Activated CD4-positive, alpha-beta memory T cell treated with anti-CD3 and anti-CD28 coated beads for 36 hours (primary cell): ENCODE measurements at regions of chr14 and their contacts with region 1.

Region 1: DNA sequence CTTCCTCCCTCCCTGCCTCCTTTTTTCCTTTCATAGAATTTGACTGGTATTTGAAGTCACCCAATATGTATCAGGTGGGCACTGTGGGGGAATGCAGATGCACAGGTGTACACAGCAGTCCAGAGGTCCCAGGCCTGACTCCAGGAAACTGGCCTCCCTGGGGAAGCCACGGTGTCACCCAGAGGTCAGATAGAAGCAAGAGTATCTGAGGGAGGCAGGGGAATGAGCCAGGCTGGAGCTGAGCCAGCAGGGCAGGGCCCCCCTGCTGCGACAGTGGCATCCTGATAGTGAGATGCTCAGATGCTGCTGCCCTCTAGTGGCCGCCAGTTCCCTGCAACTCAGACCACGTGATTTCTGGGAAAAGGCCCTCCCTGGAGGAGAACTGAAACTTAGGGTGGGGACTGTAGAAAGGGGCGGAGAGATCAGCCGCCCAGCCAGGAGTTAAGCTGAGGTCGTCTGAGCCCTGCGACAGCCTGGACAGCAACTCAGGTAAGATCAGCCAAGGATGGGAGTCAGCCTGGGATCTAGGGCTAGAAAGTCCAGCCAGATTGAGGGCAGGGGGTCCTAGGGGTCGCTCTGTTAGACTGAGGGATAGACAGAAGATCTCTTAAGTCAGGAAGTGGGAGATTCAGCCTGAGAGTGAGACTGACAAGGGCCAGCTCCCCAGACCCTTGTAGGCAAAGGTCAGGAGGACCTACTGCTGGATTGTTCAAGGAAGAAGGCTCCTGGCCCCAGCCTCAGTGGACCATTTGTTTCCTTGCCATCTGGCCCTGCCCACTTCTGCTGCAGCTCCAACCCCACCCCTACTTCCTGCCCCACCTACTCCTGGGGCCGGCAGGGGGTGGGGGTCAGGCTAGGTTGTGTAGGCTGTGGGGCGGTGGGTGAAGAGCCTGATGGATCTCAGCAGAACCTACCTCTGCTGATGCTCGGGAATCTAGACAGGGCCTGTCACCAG is at the start of gene IRF9:
- DNase-seq: peak; percentile 99
- H3K4me3 Mint-ChIP-seq: peak within 1 kb of the TSS; percentile 97
- H3K27ac Mint-ChIP-seq: peak within 1 kb of the TSS; percentile 100
- H3K4me1 Mint-ChIP-seq: peaks cover 37% of the 10 kb centered on the region
- H3K27me3 Mint-ChIP-seq: no peaks in the 10 kb centered on the region
- total RNA-seq, gene IRF9: 158 to 172 TPM

Region 2: GRCh38 chr14:24013654-24014514 is 147.2 kb before region 1 on chr14:
- CTCF ChIA-PET with region 1: interaction called, 7 read pairs
- POLR2A ChIA-PET with region 1: no interaction called
- intact Hi-C with region 1: loop called (anchors 1 kb)
- DNase-seq: peak; percentile 53
- H3K4me3 Mint-ChIP-seq: no peak overlapping the region
- H3K27ac Mint-ChIP-seq: no peak overlapping the region
- H3K4me1 Mint-ChIP-seq: peaks cover 24% of the 10 kb centered on the region
- H3K27me3 Mint-ChIP-seq: peaks cover 6% of the 10 kb centered on the region

Region 3: GRCh38 chr14:24108336-24108874 is 52.7 kb before region 1 on chr14:
- CTCF ChIA-PET with region 1: interaction called, 50 read pairs
- POLR2A ChIA-PET with region 1: interaction called, 35 read pairs
- intact Hi-C with region 1: loop called (anchors 1 kb)
- DNase-seq: no peak
- H3K4me3 Mint-ChIP-seq: peak overlapping the region; percentile 11
- H3K27ac Mint-ChIP-seq: peak overlapping the region; percentile 91
- H3K4me1 Mint-ChIP-seq: peaks cover 22% of the 10 kb centered on the region
- H3K27me3 Mint-ChIP-seq: no peaks in the 10 kb centered on the region

Region 4: GRCh38 chr14:24141097-24141880 is 19.8 kb before region 1 on chr14 and contains the start of gene EMC9:
- CTCF ChIA-PET with region 1: interaction called, 76 read pairs
- POLR2A ChIA-PET with region 1: interaction called, 60 read pairs
- intact Hi-C with region 1: loop called (anchors 1 kb)
- DNase-seq: peak; percentile 100
- H3K4me3 Mint-ChIP-seq: peak within 1 kb of the TSS; percentile 97
- H3K27ac Mint-ChIP-seq: peak within 1 kb of the TSS; percentile 94
- H3K4me1 Mint-ChIP-seq: peaks cover 65% of the 10 kb centered on the region
- H3K27me3 Mint-ChIP-seq: no peaks in the 10 kb centered on the region
- total RNA-seq, gene EMC9: 40.0 to 40.9 TPM

Region 5: DNA sequence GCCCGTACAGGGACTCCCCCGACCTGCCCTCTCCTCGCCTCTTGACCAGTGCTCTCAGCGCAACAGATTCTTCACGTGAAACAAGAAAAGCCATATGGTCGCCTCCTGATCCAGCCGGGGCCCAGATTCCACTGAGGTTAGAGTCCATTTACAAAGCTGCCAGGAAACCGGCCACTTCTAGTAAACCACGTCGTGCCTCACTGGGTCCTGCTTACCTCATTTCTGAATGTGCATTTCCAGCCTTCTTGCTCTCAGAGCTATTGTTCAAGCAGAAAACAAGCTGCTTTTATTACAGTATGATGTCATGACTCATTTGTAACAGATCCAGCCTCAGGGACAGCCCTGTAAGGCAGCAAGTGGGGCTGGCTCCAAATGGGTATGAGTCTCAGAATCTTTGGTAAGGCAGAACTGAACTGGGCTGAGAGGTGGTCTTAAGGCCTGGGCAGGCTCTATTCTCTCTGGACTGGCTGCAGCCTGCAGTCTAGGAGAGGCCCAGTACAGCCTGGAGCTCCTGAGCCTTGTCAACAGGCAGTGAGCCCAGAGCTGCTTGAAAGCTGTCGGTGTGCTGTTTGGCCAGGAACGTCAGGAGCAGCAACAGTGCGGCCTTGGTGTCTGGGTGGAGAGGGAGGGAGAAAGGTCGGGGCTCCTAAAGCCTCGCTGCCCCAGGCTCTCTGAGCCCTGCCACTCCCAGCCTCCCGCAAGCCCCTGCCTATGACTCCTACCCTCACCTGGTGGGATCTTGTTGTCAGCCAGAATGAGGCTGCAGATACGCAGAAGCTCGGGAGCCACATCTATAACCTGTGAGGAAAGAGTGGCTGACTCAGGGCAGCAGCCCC is 19.1 kb after region 1 on chr14:
- CTCF ChIA-PET with region 1: interaction called, 14 read pairs
- POLR2A ChIA-PET with region 1: interaction called, 8 read pairs
- intact Hi-C with region 1: no loop called
- DNase-seq: no peak
- H3K4me3 Mint-ChIP-seq: no peak overlapping the region
- H3K27ac Mint-ChIP-seq: no peak overlapping the region
- H3K4me1 Mint-ChIP-seq: peaks cover 1% of the 10 kb centered on the region
- H3K27me3 Mint-ChIP-seq: no peaks in the 10 kb centered on the region

Region 6: DNA sequence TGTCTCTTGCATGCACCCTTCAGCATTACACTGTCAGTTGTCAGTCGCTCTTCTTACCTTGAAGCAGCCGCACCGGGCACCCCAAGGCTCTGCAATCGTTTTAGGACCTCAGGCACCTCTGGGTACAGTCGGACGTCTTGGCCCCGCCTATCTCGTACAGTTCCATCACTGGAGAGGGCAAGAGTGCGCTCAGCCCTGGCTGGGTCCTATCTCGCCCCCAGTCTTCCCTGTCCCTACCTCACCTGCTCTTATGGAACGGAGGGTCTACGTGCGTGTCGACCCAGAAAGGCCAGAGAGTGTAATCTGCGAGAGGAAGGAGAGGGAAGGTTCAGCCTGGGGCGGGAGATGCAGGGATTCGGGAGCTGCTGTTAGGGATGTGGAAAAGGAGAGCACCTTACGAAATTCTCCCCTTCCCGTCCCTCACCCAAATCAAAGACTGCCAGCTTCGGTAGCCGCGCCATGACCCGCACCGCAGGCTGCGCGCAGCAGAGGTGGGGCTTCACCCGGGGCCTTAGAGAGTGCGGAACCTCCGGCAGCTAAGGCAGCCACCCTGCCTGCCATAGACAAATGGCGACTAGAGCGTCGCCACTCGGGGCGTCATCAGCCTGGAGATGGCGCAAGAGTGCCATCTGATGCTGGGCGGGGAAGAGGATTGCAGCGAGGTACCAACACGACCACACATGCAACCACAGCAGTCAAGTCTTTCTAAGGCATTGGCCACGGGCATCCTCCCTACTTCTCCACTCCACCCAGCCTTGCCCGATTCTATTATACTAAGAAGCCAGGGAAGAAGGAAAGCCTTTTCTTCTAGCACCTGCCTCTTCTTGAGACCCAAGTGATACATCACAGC is 54.6 kb after region 1 on chr14 and contains the start of gene MDP1:
- CTCF ChIA-PET with region 1: interaction called, 11 read pairs
- POLR2A ChIA-PET with region 1: interaction called, 14 read pairs
- intact Hi-C with region 1: loop called (anchors 1 kb)
- DNase-seq: peak; percentile 92
- H3K4me3 Mint-ChIP-seq: peak within 1 kb of the TSS; percentile 84
- H3K27ac Mint-ChIP-seq: peak within 1 kb of the TSS; percentile 94
- H3K4me1 Mint-ChIP-seq: peaks cover 41% of the 10 kb centered on the region
- H3K27me3 Mint-ChIP-seq: no peaks in the 10 kb centered on the region
- total RNA-seq, gene MDP1: 14.2 to 15.8 TPM

Region 7: GRCh38 chr14:24422694-24423601 is 261.8 kb after region 1 on chr14:
- CTCF ChIA-PET with region 1: no interaction called
- POLR2A ChIA-PET with region 1: no interaction called
- intact Hi-C with region 1: no loop called
- DNase-seq: peak; percentile 8
- H3K4me3 Mint-ChIP-seq: no peak overlapping the region
- H3K27ac Mint-ChIP-seq: no peak overlapping the region
- H3K4me1 Mint-ChIP-seq: peaks cover 24% of the 10 kb centered on the region
- H3K27me3 Mint-ChIP-seq: peaks cover 3% of the 10 kb centered on the region

Region 8: DNA sequence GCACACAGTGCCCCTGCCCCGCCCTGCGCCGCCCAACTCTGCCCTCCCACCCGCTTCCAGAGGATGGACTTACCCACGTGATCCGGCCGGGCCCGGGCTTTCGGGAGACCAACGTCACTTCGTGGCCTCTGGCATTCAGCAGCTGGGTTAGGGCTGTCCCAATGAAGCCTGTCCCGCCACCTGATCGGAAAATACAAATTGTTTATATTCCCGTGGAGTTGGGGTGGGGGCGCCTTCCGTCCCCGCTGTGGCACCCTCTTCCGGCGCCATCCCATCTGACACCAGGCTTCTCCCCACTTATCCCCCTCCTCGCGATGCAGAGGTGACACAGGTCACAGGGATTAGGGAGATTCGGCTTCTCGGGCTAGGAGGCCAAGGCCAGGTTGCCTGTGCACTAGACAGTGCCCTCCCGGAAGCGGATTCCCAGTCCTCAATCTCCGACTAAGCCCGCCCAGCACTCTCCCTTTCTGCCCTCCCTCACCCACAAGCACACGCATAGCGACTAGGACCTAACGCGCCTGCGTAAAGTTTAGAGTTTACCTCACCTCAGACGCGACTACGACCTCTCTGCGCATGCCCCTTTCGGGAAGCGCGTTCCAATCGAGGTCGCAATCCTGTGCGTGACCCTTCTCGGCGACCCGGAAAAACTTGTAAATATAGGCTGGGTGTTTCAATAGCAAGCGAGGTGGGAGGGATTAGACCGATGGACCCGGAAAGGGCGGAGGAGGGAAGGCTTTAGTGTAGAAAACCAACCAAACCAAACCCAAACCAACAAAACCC is 281.3 kb after region 1 on chr14 and contains the start of gene SDR39U1:
- CTCF ChIA-PET with region 1: no interaction called
- POLR2A ChIA-PET with region 1: interaction called, 3 read pairs
- intact Hi-C with region 1: loop called (anchors 1 kb)
- DNase-seq: peak; percentile 98
- H3K4me3 Mint-ChIP-seq: peak within 1 kb of the TSS; percentile 95
- H3K27ac Mint-ChIP-seq: peak within 1 kb of the TSS; percentile 99
- H3K4me1 Mint-ChIP-seq: peaks cover 43% of the 10 kb centered on the region
- H3K27me3 Mint-ChIP-seq: no peaks in the 10 kb centered on the region
- total RNA-seq, gene SDR39U1: 36.2 to 43.8 TPM